Head of caudate nucleus (tissue), 42 donors: ENCODE measurements at regions of chrX and their contacts with region 1.

Region 1: DNA sequence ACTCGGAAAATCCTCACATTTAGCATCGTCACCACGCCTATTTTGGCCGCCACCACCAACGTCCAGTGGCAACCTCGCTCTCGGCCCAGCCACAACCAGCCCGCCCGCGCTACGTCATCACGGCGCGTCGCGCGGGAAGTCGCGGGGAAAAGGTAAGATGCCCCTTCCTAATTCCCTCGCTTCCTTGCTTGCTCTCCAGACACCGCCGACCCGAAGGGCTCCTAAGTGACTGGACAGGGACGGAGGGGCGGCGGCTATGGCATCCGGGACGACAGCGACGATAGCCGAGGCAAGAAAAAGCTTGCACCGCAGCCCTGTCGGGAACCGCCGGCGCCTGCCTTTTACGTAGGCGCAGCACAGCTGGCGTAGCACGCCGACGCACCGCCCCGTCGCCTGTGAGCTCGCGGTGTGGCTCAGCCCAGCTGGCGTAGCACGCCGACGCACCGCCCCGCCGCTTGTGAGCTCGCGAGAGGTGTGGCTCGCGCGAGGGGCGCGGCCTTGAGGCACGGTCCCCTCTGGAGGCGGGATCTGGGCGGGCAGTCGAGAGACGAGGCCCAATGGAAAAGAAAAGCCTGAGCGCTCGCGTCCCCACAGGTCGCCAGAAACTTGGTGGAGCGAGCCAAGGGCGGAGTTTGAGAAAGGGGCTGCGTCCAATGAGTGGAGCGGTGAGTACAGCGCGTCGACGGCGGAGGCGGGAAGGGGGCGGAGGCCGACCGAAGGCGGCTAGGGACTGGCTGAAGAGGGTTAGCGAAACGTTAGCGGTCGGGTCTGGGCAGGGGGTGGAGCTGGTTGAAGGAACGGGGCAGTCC is at the start of gene HDAC6:
- DNase-seq: peak; percentile 81 to 99 (median 96)

Region 2: DNA sequence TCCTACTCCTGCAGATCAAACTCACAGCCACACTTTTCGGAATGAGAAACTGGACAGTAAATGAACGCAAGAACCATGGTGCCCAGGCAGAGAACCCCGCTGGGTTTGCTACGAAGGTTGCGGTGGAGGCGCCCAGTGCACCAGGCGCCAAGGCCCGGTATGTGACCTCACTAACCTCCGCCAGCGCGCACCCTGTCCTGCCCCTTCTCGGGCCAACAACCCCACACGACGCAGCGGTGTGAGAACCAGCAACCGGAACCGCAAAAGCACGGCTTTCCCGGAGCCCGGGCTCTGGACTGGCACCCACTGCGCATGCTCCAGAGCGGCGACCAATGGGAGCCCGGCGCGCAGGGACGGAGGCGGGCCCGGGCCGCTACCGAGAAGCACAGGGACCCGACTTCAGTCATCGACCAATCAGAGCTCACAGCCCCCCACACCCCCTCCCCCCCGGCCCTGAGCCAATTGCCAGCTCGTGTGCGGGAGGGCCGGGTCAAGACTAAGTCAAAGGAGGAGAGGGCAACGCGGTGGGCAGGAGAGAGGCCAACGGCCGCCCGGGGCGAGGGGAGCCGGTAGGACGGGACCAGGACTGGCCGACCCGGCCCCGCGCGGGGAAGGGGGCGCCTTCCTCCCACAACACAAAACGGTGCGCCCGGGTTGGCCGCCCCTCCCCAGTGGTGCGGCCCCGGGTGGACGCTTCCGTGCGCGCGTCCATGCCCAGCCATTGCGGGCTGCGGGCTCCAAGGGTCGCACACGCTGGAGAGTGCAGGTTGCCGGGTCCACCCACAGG is 125.2 kb before region 1 on chrX:
- intact Hi-C with region 1: loop called (anchors 5 kb)
- DNase-seq: peak; percentile 68 to 93 (median 86)

Region 3: DNA sequence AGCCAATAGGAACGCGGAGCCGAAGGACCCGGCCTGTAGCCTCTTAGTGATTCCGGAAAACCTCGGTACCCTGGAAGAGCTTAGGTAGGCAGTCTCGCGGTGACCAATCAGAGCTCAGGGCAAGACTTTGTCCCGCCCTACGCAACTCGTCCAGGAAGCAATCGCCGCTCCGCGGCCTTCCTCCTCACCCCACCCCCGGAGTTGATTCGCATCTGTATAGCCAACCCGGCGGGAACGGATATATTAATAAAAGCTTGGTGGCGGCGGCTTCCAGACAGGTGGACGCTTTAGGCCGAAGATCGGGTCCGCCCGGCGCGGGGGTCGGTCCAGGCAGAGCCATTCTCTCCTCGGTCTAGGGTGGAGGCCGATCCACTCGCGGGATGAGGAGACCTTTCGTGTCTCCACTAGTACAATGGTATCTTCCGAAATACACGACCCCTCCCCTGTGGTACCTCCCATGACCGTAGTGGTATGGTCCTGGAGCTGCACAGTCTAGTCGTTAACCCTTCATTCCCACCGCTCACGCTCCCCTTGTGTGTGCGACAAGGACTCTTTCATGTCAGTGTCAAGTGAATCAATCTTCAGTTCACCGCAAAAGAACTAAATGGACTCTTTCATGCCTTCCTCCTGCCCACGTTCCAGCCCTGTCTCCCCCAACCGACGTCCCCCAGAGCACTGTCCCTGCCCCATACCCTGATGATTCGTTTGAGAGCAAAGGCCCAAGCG is 64.1 kb before region 1 on chrX:
- intact Hi-C with region 1: loop called (anchors 5 kb)
- DNase-seq: peak; percentile 82 to 97 (median 92)

Region 4: GRCh38 chrX:48897621-48898306 is 96.3 kb after region 1 on chrX and contains the starts of genes PQBP1 and TIMM17B:
- intact Hi-C with region 1: loop called (anchors 10 kb)
- DNase-seq: peak; percentile 84 to 96 (median 92)